Esophagus squamous epithelium (tissue), 5 donors: ENCODE measurements at regions of chr6 and their contacts with region 1.

Region 1: DNA sequence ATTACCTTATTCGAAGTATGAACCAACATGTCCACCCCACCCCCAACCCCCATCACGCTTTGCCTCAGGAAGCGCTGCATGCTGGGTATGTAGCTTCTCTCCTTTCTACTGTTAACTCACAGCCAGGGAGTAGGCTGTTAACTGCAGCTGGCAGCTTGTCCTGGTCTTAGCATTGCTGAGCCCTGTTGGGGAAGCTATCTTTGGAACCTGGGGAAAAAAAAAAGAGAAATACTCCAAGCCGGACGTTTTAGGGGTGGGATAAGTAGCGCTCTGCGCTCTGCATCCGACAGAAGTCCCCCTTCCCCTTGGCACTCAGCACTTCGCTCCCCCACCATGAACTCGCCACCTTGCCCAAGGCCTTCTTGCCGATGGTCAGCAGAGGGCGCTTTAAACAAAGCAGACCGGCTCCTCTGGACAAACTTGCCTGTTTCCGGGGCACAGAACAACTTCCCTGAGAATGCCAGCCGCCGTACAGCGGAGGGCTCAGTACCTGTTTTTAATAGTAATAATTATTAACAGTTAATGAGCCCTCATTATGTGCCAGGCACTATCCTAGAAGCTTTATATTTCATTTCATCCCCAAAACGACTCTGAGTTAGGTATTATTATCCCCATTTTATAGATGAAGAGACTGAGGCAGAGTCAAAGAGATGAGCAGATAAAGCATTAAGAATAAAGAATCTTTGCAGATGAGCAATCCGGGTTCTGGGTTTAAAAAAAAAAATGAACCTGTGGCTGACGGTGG is 35.2 kb upstream of the MDFI start:
- DNase-seq: no peak
- H3K4me3 ChIP-seq: peak overlapping the region in 1 of 4 donors; percentile 30
- H3K27ac ChIP-seq: no peak overlapping the region
- H3K4me1 ChIP-seq: peaks cover 5 to 10% (median 8%) of the 10 kb centered on the region in 3 donors
- H3K27me3 ChIP-seq: no peaks in the 10 kb centered on the region
- CTCF ChIP-seq: peak; percentile 81 to 91 (median 89)
- POLR2A ChIP-seq: no peak

Region 2: DNA sequence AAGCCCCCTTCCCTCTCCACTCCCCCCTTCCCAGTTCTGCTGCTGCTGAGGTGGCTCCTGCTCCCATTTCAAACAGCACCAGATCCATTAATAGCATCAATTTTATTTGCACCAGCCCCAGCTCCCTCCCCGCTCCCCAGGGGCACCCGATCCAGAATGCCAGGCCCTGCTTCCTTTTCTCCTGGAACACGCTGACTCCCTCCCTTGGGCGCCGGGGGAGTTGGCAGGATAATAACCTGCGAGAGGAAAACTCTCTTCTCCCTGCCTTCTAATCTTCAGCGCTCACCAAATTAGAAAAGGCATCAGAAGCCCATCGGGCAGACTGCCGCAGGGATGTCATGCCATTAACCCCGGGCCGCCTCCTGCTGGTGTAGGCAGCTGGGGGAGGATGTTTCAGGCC is 189.8 kb before region 1 on chr6:
- intact Hi-C with region 1: no loop called
- DNase-seq: no peak
- H3K4me3 ChIP-seq: no peak overlapping the region
- H3K27ac ChIP-seq: no peak overlapping the region
- H3K4me1 ChIP-seq: no peaks in the 10 kb centered on the region
- H3K27me3 ChIP-seq: peaks cover 0 to 89% (median 1%) of the 10 kb centered on the region in 4 donors
- CTCF ChIP-seq: no peak
- POLR2A ChIP-seq: no peak

Region 3: DNA sequence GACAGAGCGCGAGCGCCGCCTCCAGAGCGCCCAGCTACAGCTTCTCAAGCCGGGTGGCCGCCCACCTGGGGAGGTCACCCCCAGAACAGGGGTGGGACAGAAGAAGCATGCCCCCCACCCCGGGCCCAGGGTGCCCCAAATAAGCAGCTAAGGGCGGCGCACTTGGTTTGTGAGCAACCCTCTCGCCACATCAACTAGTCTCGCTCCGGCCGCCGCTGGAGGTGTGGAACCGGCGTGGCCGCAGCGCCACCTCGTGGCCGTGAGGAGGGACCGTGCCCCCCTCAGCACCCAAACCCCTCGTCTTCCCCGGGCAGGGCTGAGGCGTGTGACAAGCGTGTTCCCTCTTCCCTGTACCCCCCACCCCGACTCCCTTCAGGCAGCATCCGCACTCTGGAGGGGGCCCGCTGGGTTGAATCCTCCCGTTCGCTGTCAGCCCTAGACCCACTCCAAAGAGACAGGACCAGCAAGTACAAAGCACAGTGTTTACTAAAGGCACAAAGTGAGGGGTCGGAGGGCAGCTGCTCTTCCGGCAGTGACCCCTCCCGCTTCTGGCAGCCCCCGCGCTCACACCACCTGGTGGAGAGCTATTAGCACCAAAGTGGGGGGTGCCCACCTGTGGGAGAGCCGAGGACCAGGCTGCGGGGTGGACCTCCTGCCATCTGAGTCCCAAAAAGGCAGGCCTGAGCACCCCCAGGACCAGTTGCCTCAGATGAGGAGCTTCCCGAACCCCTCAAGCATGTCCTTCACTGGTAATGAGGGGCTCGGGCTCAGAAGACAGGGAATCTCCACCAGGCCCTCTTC is 80.7 kb after region 1 on chr6:
- intact Hi-C with region 1: loop called (anchors 5 kb)
- DNase-seq: no peak
- H3K4me3 ChIP-seq: peak overlapping the region; percentile 27 to 55 (median 46)
- H3K27ac ChIP-seq: peak overlapping the region; percentile 25 to 66 (median 52)
- H3K4me1 ChIP-seq: peaks cover 8 to 39% (median 16%) of the 10 kb centered on the region in 3 donors
- H3K27me3 ChIP-seq: peaks cover 0 to 4% (median 0%) of the 10 kb centered on the region in 4 donors
- CTCF ChIP-seq: peak; percentile 85 to 96 (median 90)
- POLR2A ChIP-seq: no peak

Region 4: GRCh38 chr6:41779793-41780545 is 176.9 kb after region 1 on chr6 and contains the start of gene FRS3:
- intact Hi-C with region 1: loop called (anchors 10 kb)
- DNase-seq: peak; percentile 74
- H3K4me3 ChIP-seq: peak within 1 kb of the TSS; percentile 47 to 91 (median 78)
- H3K27ac ChIP-seq: peak within 1 kb of the TSS; percentile 85 to 94 (median 91)
- H3K4me1 ChIP-seq: peaks cover 32 to 59% (median 34%) of the 10 kb centered on the region in 3 donors
- H3K27me3 ChIP-seq: no peaks in the 10 kb centered on the region
- CTCF ChIP-seq: peak; percentile 65 to 98 (median 96)
- POLR2A ChIP-seq: peak in 2 of 4 donors; percentile 15 to 36
- total RNA-seq, gene FRS3: 0.31 to 5.5 (median 1.5) TPM